BJ (cell line): ENCODE measurements at regions of chr2 and their contacts with region 1.

Region 1: GRCh38 chr2:178914259-178914849 is 107.1 kb upstream of the TTN start:
- DNase-seq: peak; percentile 26
- H3K4me3 ChIP-seq: no peak overlapping the region
- H3K27me3 ChIP-seq: no peaks in the 10 kb centered on the region
- CTCF ChIP-seq: peak; percentile 88

Region 2: GRCh38 chr2:178796079-178796677 is 118.2 kb before region 1 on chr2:
- CTCF ChIA-PET with region 1: interaction called, 25 read pairs
- POLR2A ChIA-PET with region 1: no interaction called
- DNase-seq: peak; percentile 6
- H3K4me3 ChIP-seq: no peak overlapping the region
- H3K27me3 ChIP-seq: peaks cover 2% of the 10 kb centered on the region; the same call in 1 of the 2 replicates
- CTCF ChIP-seq: peak; percentile 45

Region 3: DNA sequence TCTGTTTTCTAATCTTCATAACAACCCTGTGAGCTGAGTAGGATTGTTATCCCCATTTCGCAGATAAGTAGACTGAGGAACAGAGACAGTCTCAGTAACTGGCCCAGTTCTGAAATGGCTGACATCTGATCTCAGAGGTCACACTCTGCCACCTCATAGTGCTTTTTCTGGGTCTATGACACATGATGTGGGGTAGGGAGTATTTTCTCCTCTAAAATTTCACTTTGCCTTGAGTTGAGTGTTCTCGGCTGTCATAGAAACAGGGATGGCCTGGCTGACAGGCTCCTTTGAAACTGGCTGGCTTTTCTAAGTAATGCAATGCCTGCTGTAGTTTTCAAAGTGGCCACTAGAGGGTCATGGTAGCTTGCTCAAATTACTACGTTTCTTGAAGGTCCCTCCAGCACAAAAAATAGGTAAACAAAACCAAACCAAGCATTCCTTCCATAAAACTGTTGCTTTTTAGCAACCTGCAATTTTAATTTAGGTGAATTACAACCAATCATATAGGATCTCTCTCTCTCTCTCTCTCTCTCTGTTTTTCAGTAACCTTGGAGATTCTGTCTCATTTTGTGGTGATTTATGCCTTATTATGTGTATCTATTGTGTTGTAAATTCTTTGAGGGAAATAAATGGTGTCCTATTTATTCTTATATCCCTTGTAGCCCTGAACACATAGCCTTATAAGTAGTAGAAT is 22.9 kb before region 1 on chr2:
- CTCF ChIA-PET with region 1: interaction called, 22 read pairs
- POLR2A ChIA-PET with region 1: no interaction called
- DNase-seq: no peak
- H3K4me3 ChIP-seq: no peak overlapping the region
- H3K27me3 ChIP-seq: no peaks in the 10 kb centered on the region
- CTCF ChIP-seq: peak; percentile 93

Region 4: GRCh38 chr2:178927173-178927572 is 12.8 kb after region 1 on chr2:
- CTCF ChIA-PET with region 1: interaction called, 12 read pairs
- POLR2A ChIA-PET with region 1: no interaction called
- DNase-seq: no peak
- H3K4me3 ChIP-seq: no peak overlapping the region
- H3K27me3 ChIP-seq: no peaks in the 10 kb centered on the region
- CTCF ChIP-seq: no peak

Region 5: GRCh38 chr2:179020156-179020750 is 105.9 kb after region 1 on chr2:
- CTCF ChIA-PET with region 1: no interaction called
- POLR2A ChIA-PET with region 1: no interaction called
- DNase-seq: no peak
- H3K4me3 ChIP-seq: no peak overlapping the region
- H3K27me3 ChIP-seq: no peaks in the 10 kb centered on the region
- CTCF ChIP-seq: 0 out of 2 replicates have a peak, but pooled peaks have one; percentile 14